ENCODE measurements at regions of chr3 and their contacts with region 1.

Region 1: GRCh38 chr3:66816090-66816761 is 181.9 kb upstream of the KBTBD8 start:
- DNase-seq: no peak
- H3K4me3 Mint-ChIP-seq: no peak overlapping the region
- H3K27ac Mint-ChIP-seq: no peak overlapping the region
- H3K4me1 Mint-ChIP-seq: no peaks in the 10 kb centered on the region
- H3K27me3 Mint-ChIP-seq: peaks cover 15% of the 10 kb centered on the region

Region 2: GRCh38 chr3:66253790-66254620 is 562.2 kb before region 1 on chr3:
- intact Hi-C with region 1: loop called (anchors 2 kb)
- DNase-seq: no peak
- H3K4me3 Mint-ChIP-seq: no peak overlapping the region
- H3K27ac Mint-ChIP-seq: no peak overlapping the region
- H3K4me1 Mint-ChIP-seq: peaks cover 4% of the 10 kb centered on the region
- H3K27me3 Mint-ChIP-seq: no peaks in the 10 kb centered on the region

Region 3: DNA sequence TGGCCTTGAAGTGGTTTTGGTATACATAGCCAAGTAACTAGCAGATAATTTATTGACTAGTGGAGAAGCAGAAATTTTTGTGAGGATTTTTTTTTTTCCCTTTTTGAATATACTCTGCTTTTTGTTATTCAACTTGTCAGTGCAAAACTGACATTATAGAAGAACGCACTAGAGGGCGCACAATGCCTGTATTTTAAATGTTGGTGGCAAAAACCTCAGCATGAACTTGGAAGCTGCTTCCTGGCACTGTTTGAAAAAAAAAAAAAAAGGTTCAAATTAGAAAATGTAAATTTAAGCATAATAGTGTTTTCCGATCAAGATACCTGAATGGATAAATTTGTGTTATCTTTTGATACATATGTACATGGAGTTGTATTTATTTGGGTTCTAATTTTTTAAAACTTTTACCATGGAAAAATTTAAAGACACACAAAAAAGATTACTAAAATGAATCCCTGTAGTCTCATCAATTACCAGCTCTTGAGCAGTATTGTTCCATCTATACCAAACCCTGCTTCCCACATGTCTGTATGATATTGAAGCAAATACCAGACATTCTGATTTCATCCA is 539.4 kb before region 1 on chr3:
- intact Hi-C with region 1: loop called (anchors 1 kb)
- DNase-seq: peak; percentile 37
- H3K4me3 Mint-ChIP-seq: no peak overlapping the region
- H3K27ac Mint-ChIP-seq: no peak overlapping the region
- H3K4me1 Mint-ChIP-seq: peaks cover 12% of the 10 kb centered on the region
- H3K27me3 Mint-ChIP-seq: no peaks in the 10 kb centered on the region

Region 4: GRCh38 chr3:66407611-66408218 is 408.5 kb before region 1 on chr3:
- intact Hi-C with region 1: loop called (anchors 1 kb)
- DNase-seq: peak; percentile 52
- H3K4me3 Mint-ChIP-seq: no peak overlapping the region
- H3K27ac Mint-ChIP-seq: no peak overlapping the region
- H3K4me1 Mint-ChIP-seq: peaks cover 10% of the 10 kb centered on the region
- H3K27me3 Mint-ChIP-seq: no peaks in the 10 kb centered on the region

Region 5: GRCh38 chr3:66998113-66998903 is 182.1 kb after region 1 on chr3 and contains the start of gene KBTBD8:
- intact Hi-C with region 1: no loop called
- DNase-seq: peak; percentile 98
- H3K4me3 Mint-ChIP-seq: peak within 1 kb of the TSS; percentile 95
- H3K27ac Mint-ChIP-seq: peak within 1 kb of the TSS; percentile 86
- H3K4me1 Mint-ChIP-seq: peaks cover 27% of the 10 kb centered on the region
- H3K27me3 Mint-ChIP-seq: peaks cover 14% of the 10 kb centered on the region
- total RNA-seq, gene KBTBD8: 10.4 and 13.4 TPM in 2 replicates

Measured in activated T-helper 2 cell treated with anti-CD3 and anti-CD28 coated beads, Interferon-gamma antibody, Interleukin-2, Interleukin-4, amounts not matched to agents 10 μg/mL and 5 μg/mL and 100 μg/mL, durations not matched to agents 14 hours and 24 hours and 36 hours (primary cell).